Motor neuron (in vitro differentiated cells): ENCODE measurements at regions of chr14 and their contacts with region 1.

Region 1: GRCh38 chr14:70809543-70810244 is 381 bp upstream of the MAP3K9 start:
- ATAC-seq: peak; percentile 85 to 94 (median 93)
- H3K4me3 ChIP-seq: peak overlapping the region; percentile 59 to 81 (median 79)
- H3K27ac ChIP-seq: peak overlapping the region; percentile 0 to 41
- H3K4me1 ChIP-seq: peaks cover 7 to 32% of the 10 kb centered on the region in 2 donors

Region 2: GRCh38 chr14:70600382-70601157 is 209.1 kb before region 1 on chr14 and contains the start of gene MED6:
- in situ Hi-C with region 1: loop called in 2 of 9 experiments (anchors 25 kb)
- ATAC-seq: peak; percentile 94 to 99 (median 98)
- H3K4me3 ChIP-seq: peak within 1 kb of the TSS; percentile 82 to 100 (median 94)
- H3K27ac ChIP-seq: peak within 1 kb of the TSS; percentile 78 to 91
- H3K4me1 ChIP-seq: peaks cover 7 to 12% of the 10 kb centered on the region in 2 donors
- total RNA-seq, gene MED6: 28.3 to 49.0 (median 35.8) TPM

Region 3: DNA sequence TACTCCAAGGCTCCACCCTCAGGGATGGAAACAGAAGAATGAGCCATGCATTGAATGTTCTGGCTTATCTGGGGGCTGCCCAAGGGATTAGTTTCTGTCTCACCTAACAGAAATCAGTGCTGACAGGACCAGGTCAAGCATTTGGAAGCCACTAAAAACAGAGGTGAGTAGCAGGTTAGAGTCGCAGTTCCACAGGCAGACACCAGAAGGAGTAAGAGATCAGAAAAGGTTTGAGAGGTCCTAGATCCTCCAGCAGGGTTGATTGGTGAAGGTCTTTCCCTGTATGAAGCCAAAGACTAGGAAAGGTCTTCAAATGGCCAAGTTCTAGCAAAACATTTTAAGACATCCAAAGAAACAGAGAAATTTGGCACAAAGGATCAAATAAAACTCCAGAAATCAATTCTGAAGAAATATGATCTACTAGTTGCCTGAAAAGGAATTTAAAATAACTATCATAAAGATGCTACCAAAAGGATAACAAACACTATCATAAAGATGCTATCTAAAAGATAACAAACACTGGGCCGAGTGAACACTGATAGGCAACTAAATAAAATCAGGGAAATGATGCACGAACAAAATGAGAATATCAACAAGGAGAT is 187.5 kb before region 1 on chr14:
- in situ Hi-C with region 1: loop called in 3 of 9 experiments (anchors 10 to 25 kb)
- ATAC-seq: peak in 3 of 8 experiments; percentile 73 to 88 (median 75)
- H3K4me3 ChIP-seq: no peak overlapping the region
- H3K27ac ChIP-seq: no peak overlapping the region
- H3K4me1 ChIP-seq: no peaks in the 10 kb centered on the region

Region 4: GRCh38 chr14:70692226-70692625 is 117.5 kb before region 1 on chr14:
- in situ Hi-C with region 1: no loop called
- ATAC-seq: no peak
- H3K4me3 ChIP-seq: no peak overlapping the region
- H3K27ac ChIP-seq: no peak overlapping the region
- H3K4me1 ChIP-seq: no peaks in the 10 kb centered on the region

Region 5: DNA sequence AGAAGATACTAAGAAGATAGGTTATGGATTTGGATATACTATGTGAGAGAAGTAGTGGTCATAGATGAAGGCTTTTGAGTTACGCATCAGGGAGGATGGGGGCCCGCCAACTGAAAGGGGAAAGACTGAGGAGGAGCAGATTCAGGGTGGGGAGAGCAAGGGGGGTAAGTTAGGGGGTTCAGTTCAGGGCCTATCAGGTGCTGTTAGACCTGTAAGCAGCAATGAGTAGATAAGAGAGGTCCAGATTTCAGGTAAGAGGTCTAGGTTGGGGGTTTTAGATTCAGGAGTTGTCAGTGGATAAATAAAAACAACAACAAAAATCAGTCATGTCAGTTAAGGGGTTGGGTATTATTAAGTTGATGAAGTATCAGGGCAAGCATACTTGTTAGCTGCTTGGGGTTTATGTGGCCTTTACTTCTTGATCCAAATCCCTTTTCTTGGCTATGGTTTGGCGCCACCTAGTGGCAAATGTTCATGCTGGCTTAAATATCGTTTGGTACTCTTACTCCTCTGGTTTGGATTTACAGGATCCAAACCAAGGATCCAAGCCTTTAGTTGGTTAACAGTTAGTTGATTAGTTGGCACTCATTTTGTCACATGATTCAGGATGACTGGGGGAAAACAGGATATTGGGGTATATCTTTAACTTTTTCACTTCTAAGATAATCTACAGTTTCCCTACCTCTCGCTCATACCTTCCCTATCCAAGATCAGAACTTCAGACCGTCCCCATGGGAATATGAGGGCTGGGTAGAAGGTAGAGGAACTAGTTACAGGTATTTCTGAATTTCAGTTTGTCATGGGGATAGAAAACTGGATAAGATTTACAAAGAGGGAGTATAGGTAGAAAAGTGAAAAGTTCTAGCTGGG is 162.6 kb after region 1 on chr14:
- in situ Hi-C with region 1: loop called in 1 of 9 experiments (anchors 25 kb)
- ATAC-seq: peak in 7 of 8 experiments; percentile 64 to 90 (median 75)
- H3K4me3 ChIP-seq: no peak overlapping the region
- H3K27ac ChIP-seq: no peak overlapping the region
- H3K4me1 ChIP-seq: peaks cover 0 to 5% of the 10 kb centered on the region in 2 donors

Region 6: GRCh38 chr14:71231521-71232393 is 422.1 kb after region 1 on chr14:
- in situ Hi-C with region 1: no loop called
- ATAC-seq: peak in 1 of 8 experiments; percentile 23
- H3K4me3 ChIP-seq: no peak overlapping the region
- H3K27ac ChIP-seq: no peak overlapping the region
- H3K4me1 ChIP-seq: peaks cover 0 to 6% of the 10 kb centered on the region in 2 donors